ENCODE measurements at regions of chr12 and their contacts with region 1.

Region 1: DNA sequence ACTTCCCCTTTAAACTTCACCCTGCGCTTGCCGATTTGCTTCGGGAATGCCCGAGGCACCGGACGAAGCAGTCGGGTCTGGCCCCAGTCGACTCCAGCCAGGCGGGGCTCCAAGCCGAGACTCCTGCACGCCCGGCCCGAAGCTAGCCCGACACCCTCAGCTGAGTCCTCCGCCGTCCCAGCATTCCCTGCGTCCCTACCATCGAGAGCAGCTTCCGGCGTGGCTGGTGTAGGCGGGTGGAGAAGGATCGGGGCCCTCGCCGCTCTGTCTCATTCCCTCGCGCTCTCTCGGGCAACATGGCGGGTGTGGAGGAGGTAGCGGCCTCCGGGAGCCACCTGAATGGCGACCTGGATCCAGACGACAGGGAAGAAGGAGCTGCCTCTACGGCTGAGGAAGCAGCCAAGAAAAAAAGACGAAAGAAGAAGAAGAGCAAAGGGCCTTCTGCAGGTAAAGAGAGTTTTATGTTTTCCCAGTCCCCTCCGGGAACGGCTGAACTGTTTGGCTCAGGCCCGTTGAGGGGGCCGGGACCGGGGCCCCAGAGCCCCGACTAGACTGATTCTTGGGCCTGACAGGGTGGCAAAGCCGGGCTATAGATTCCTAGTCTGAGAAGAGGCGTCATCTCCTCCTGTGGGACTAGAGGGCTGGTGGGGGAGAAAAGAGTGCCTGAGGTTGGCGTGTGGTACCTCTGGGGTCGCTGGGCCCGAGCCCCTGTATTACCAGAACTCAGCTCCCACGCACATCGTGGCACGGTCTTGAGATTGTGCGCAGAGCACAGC is at the start of gene METAP2:
- DNase-seq: peak; percentile 98
- H3K4me3 Mint-ChIP-seq: peak within 1 kb of the TSS; percentile 90
- H3K27ac Mint-ChIP-seq: peak within 1 kb of the TSS; percentile 99
- H3K4me1 Mint-ChIP-seq: peaks cover 16% of the 10 kb centered on the region
- H3K27me3 Mint-ChIP-seq: no peaks in the 10 kb centered on the region
- CTCF ChIP-seq: no peak
- total RNA-seq, gene METAP2: 91.5 and 122 TPM in 2 replicates

Region 2: GRCh38 chr12:95072900-95073697 is 401.0 kb before region 1 on chr12 and contains the start of gene NR2C1:
- CTCF ChIA-PET with region 1: no interaction called
- POLR2A ChIA-PET with region 1: interaction called, 24 read pairs
- intact Hi-C with region 1: no loop called
- DNase-seq: peak; percentile 92
- H3K4me3 Mint-ChIP-seq: peak within 1 kb of the TSS; percentile 88
- H3K27ac Mint-ChIP-seq: peak within 1 kb of the TSS; percentile 59
- H3K4me1 Mint-ChIP-seq: peaks cover 4% of the 10 kb centered on the region
- H3K27me3 Mint-ChIP-seq: no peaks in the 10 kb centered on the region
- CTCF ChIP-seq: no peak
- total RNA-seq, gene NR2C1: 29.0 and 35.2 TPM in 2 replicates

Region 3: GRCh38 chr12:95164656-95165055 is 309.4 kb before region 1 on chr12:
- CTCF ChIA-PET with region 1: no interaction called
- POLR2A ChIA-PET with region 1: no interaction called
- intact Hi-C with region 1: no loop called
- DNase-seq: no peak
- H3K4me3 Mint-ChIP-seq: no peak overlapping the region
- H3K27ac Mint-ChIP-seq: no peak overlapping the region
- H3K4me1 Mint-ChIP-seq: peaks cover 10% of the 10 kb centered on the region
- H3K27me3 Mint-ChIP-seq: no peaks in the 10 kb centered on the region
- CTCF ChIP-seq: no peak

Region 4: GRCh38 chr12:95204141-95204866 is 269.8 kb before region 1 on chr12:
- CTCF ChIA-PET with region 1: no interaction called
- POLR2A ChIA-PET with region 1: interaction called, 26 read pairs
- intact Hi-C with region 1: no loop called
- DNase-seq: peak; percentile 100
- H3K4me3 Mint-ChIP-seq: peak overlapping the region; percentile 77
- H3K27ac Mint-ChIP-seq: peak overlapping the region; percentile 98
- H3K4me1 Mint-ChIP-seq: peaks cover 45% of the 10 kb centered on the region
- H3K27me3 Mint-ChIP-seq: no peaks in the 10 kb centered on the region
- CTCF ChIP-seq: no peak

Region 5: GRCh38 chr12:95304673-95305198 is 169.3 kb before region 1 on chr12:
- CTCF ChIA-PET with region 1: no interaction called
- POLR2A ChIA-PET with region 1: interaction called, 10 read pairs
- intact Hi-C with region 1: no loop called
- DNase-seq: no peak
- H3K4me3 Mint-ChIP-seq: no peak overlapping the region
- H3K27ac Mint-ChIP-seq: no peak overlapping the region
- H3K4me1 Mint-ChIP-seq: peaks cover 12% of the 10 kb centered on the region
- H3K27me3 Mint-ChIP-seq: no peaks in the 10 kb centered on the region
- CTCF ChIP-seq: no peak

Region 6: GRCh38 chr12:95385246-95386035 is 88.6 kb before region 1 on chr12:
- CTCF ChIA-PET with region 1: no interaction called
- POLR2A ChIA-PET with region 1: interaction called, 25 read pairs
- intact Hi-C with region 1: no loop called
- DNase-seq: peak; percentile 43
- H3K4me3 Mint-ChIP-seq: peak overlapping the region; percentile 6
- H3K27ac Mint-ChIP-seq: peak overlapping the region; percentile 67
- H3K4me1 Mint-ChIP-seq: peaks cover 16% of the 10 kb centered on the region
- H3K27me3 Mint-ChIP-seq: no peaks in the 10 kb centered on the region
- CTCF ChIP-seq: no peak

Region 7: DNA sequence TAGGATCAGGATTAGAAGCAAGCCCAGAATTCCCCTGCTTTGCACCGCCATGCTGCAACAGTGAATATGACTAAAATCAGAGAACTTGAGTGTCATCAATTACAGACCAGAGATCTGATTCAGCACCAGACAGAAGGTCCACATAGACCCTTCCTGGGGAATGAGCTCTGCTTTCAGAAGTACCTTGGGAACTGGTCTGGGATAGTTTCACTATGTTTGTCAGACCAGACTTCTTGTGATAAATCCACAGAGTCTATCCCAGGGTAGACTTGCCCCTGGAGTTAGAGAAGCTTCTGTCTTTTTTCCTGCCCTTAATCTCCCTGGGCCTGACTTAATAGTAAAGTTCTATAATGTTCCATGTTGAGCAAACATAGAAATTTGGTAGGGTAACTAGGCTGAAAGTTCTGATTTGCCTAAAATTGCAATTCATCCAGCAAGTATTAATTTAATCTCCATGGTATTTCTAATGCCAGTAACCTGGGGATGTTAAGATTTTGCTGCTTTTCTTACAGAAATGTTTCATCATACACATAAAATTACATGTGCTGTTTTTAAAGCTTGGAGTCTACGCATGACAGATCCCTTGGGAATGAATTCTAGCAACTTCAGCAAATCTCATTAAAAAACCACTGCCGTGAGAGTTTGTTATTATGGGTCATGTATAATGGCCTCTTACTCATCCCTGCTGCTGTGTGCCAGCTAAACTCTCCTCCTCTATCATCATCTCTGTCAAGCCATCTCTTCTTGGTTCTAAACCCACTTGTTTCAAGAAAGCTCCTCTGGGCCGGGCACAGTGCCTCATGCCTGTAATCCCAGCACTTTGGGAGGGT is 61.4 kb before region 1 on chr12:
- CTCF ChIA-PET with region 1: no interaction called
- POLR2A ChIA-PET with region 1: interaction called, 37 read pairs
- intact Hi-C with region 1: no loop called
- DNase-seq: peak; percentile 78
- H3K4me3 Mint-ChIP-seq: no peak overlapping the region
- H3K27ac Mint-ChIP-seq: peak overlapping the region; percentile 27
- H3K4me1 Mint-ChIP-seq: no peaks in the 10 kb centered on the region
- H3K27me3 Mint-ChIP-seq: no peaks in the 10 kb centered on the region
- CTCF ChIP-seq: no peak

Region 8: DNA sequence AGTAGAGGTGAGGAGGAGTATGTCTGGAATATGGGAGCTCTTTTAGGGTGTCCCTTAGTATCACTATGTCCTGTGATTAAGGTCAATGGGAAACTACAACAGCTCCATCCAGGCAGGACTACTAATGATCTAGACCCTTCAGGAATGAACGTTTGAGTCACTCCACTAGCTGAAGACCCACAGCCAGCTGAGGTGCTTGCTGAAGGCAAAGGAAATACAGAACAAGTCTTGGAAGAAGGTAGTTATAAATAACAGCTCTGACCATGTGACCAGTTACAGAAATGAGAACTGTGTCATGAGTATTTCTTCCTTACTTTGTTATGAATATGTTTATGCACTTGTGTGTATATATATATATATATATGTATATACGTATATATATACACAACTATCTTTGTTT is 117.7 kb after region 1 on chr12:
- CTCF ChIA-PET with region 1: no interaction called
- POLR2A ChIA-PET with region 1: no interaction called
- intact Hi-C with region 1: no loop called
- DNase-seq: no peak
- H3K4me3 Mint-ChIP-seq: no peak overlapping the region
- H3K27ac Mint-ChIP-seq: no peak overlapping the region
- H3K4me1 Mint-ChIP-seq: no peaks in the 10 kb centered on the region
- H3K27me3 Mint-ChIP-seq: no peaks in the 10 kb centered on the region
- CTCF ChIP-seq: no peak

Region 9: GRCh38 chr12:96035278-96036236 is 561.5 kb after region 1 on chr12 and contains the start of gene LTA4H:
- CTCF ChIA-PET with region 1: no interaction called
- POLR2A ChIA-PET with region 1: no interaction called
- intact Hi-C with region 1: no loop called
- DNase-seq: peak; percentile 99
- H3K4me3 Mint-ChIP-seq: no peak within 1 kb of the TSS
- H3K27ac Mint-ChIP-seq: no peak within 1 kb of the TSS
- H3K4me1 Mint-ChIP-seq: peaks cover 8% of the 10 kb centered on the region
- H3K27me3 Mint-ChIP-seq: no peaks in the 10 kb centered on the region
- CTCF ChIP-seq: no peak
- total RNA-seq, gene LTA4H: 52.3 and 66.0 TPM in 2 replicates

Measured in MCF 10A (cell line).